Left cardiac atrium (tissue), 4 donors: ENCODE measurements at regions of chr11 and their contacts with region 1.

Region 1: GRCh38 chr11:119891055-119891768 is 162.2 kb upstream of the NECTIN1 start:
- DNase-seq: peak; percentile 66
- ATAC-seq: peak; percentile 92 to 93

Region 2: DNA sequence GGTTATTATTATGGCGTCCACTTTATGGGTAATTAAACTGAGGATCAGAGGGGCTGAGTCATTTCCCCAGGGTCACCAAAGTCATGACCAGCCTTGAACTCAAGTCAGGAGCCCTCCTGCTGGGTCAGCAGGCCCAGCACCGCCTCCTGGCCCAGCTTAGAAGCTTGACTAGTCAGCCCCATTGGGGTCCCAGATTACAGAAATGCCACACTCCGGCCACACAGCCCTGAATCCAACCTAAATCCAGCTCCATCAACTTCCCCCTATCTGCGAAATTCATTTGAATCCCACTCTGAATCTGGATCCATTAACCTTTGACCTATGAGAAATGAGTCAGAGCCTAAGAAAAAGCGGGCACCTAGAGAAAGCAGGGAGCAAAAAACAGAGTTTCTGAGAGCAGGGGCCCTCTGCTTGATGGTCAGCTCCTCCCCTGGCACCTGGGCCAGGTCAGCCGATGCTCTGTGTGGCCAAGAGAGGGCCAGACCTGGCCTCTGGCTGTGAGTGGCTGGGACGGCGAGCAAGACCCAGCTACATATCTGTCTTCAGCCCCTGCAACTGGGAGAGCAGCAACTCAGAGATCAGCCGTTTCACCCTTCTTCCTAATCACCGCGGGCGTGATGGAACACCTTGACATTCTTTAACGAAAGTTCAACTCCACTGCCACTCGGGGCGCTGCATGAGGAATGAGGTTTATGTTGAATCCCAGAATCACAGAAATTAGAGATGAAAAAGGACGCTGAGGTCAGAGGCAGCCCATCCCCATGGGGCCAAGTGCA is 50.6 kb after region 1 on chr11:
- intact Hi-C with region 1: loop called in 1 of 2 experiments (anchors 2 kb)
- DNase-seq: no peak
- ATAC-seq: no peak

Region 3: DNA sequence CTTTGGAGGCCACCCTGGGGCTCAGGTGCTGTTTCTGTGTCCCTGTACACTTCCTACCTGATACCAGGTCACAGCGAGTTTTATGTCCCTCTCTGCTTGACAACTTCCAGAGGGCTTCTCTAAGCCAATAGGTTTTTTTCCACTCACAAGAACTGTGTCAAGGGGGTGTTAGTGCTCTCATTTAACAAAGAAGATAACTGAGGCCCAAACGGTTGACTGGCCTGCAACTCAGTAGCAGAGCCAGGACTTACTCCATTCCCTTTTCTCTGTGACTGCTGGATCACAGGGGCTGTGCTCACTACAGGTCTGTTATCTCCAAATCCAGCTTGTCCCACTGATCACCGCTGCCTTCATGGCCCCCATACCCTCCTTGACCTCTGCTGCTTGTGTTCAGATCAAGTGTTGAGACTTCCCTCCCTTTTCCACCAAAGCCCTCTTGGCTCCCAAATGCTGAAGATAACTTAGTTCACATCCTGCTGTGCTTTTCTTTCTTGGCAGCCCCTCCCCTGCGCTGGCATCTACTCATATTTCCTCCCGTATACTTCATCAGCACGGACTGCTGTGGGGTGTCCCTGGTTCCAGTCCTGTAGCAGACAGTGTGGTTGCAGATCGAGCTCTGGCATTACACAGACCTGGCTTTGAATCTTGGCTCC is 390.1 kb after region 1 on chr11:
- intact Hi-C with region 1: no loop called
- DNase-seq: peak; percentile 45
- ATAC-seq: peak; percentile 58 to 70